CD14-positive monocyte (primary cell): ENCODE measurements at regions of chr2 and their contacts with region 1.

Region 1: GRCh38 chr2:171433763-171434670 is at the starts of genes DCAF17 and METTL8:
- DNase-seq: peak; percentile 88 to 92 (median 91)
- H3K4me3 ChIP-seq: peak within 1 kb of the TSS; percentile 71 to 84 (median 77)
- H3K4me3 Mint-ChIP-seq: peak within 1 kb of the TSS; percentile 87 to 90
- H3K27ac ChIP-seq: peak within 1 kb of the TSS; percentile 87 to 98
- H3K27ac Mint-ChIP-seq: peak within 1 kb of the TSS; percentile 85 to 95 (median 94)
- H3K4me1 ChIP-seq: peaks cover 13 to 19% of the 10 kb centered on the region in 2 donors
- H3K4me1 Mint-ChIP-seq: peaks cover 18% of the 10 kb centered on the region
- H3K27me3 ChIP-seq: no peaks in the 10 kb centered on the region
- H3K27me3 Mint-ChIP-seq: no peaks in the 10 kb centered on the region
- CTCF ChIP-seq: no peak
- polyA plus RNA-seq, gene DCAF17: 4.1 to 7.2 (median 7.0) TPM
- polyA plus RNA-seq, gene METTL8: 3.3 to 9.8 (median 6.9) TPM

Region 2: GRCh38 chr2:170973492-170974303 is 460.3 kb before region 1 on chr2:
- intact Hi-C with region 1: loop called in 1 of 2 experiments (anchors 5 kb)
- DNase-seq: peak; percentile 60 to 69 (median 64)
- H3K4me3 ChIP-seq: peak overlapping the region; percentile 60 to 90 (median 82)
- H3K4me3 Mint-ChIP-seq: peak overlapping the region; percentile 83 to 88
- H3K27ac ChIP-seq: peak overlapping the region; percentile 20 to 53
- H3K27ac Mint-ChIP-seq: peak overlapping the region in 2 of 7 donors; percentile 47 to 71
- H3K4me1 ChIP-seq: peaks cover 6 to 14% of the 10 kb centered on the region in 2 donors
- H3K4me1 Mint-ChIP-seq: peaks cover 15% of the 10 kb centered on the region
- H3K27me3 ChIP-seq: peaks cover 0 to 16% of the 10 kb centered on the region in 2 donors
- H3K27me3 Mint-ChIP-seq: peaks cover 4 to 23% (median 8%) of the 10 kb centered on the region in 3 donors
- CTCF ChIP-seq: peak; percentile 98

Region 3: DNA sequence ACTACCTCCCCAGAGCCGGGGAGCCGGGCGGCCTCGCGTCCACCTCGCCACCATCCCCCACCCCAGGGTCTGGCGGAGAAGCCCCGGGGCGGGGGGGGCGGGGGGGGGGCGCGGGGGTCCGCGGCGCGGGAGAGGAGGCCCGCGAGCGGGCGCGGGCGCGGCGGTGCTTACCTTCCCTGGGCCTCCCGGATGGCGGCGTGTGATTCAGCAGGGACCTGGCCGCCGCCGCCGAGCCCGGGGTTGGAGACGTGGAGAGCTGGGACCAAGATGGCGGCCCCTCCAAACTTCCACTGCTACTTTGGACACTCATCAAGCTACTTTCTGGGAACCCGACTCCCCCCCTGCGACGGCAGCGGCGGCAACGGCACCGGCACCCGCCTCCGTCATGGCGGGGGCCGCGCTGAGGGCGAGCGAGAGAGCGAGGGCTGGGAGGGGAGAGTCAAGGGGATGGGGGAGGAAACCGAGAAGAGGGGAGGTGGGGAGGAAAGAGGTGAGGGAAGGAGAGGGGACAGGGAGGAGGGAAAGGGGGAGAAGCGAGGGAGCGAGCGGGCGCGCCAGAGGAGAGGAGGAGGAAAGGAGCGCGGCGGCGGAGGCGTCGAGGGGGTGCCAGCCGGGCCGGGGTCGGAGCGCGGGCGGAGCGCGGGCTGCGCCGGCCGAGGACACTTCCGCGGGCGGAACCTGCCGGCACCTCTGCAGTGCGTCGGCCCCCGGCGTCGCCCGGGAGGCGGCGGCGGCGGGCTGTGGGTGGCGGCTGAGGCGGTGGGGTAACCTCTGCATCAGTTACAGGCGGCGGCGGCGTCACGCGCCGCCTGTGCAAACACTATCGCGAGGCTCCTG is 273.7 kb before region 1 on chr2 and contains the start of gene TLK1:
- intact Hi-C with region 1: loop called (anchors 5 to 10 kb)
- DNase-seq: peak; percentile 47 to 61 (median 53)
- H3K4me3 ChIP-seq: peak within 1 kb of the TSS; percentile 79 to 100 (median 94)
- H3K4me3 Mint-ChIP-seq: peak within 1 kb of the TSS; percentile 95
- H3K27ac ChIP-seq: peak within 1 kb of the TSS; percentile 72 to 91
- H3K27ac Mint-ChIP-seq: peak within 1 kb of the TSS; percentile 80 to 97 (median 96)
- H3K4me1 ChIP-seq: peaks cover 19 to 29% of the 10 kb centered on the region in 2 donors
- H3K4me1 Mint-ChIP-seq: peaks cover 53% of the 10 kb centered on the region
- H3K27me3 ChIP-seq: no peaks in the 10 kb centered on the region
- H3K27me3 Mint-ChIP-seq: peaks cover 0 to 3% (median 0%) of the 10 kb centered on the region in 3 donors
- CTCF ChIP-seq: no peak
- polyA plus RNA-seq, gene TLK1: 6.3 to 20.0 (median 8.6) TPM

Region 4: GRCh38 chr2:171522052-171522787 is 88.2 kb after region 1 on chr2 and contains the start of gene CYBRD1:
- intact Hi-C with region 1: no loop called
- DNase-seq: peak; percentile 10 to 36 (median 15)
- H3K4me3 ChIP-seq: peak within 1 kb of the TSS; percentile 55 to 85 (median 72)
- H3K4me3 Mint-ChIP-seq: peak within 1 kb of the TSS; percentile 96 to 97
- H3K27ac ChIP-seq: peak within 1 kb of the TSS; percentile 60 to 83
- H3K27ac Mint-ChIP-seq: peak within 1 kb of the TSS; percentile 58 to 87 (median 84)
- H3K4me1 ChIP-seq: peaks cover 16 to 24% of the 10 kb centered on the region in 2 donors
- H3K4me1 Mint-ChIP-seq: peaks cover 21% of the 10 kb centered on the region
- H3K27me3 ChIP-seq: no peaks in the 10 kb centered on the region
- H3K27me3 Mint-ChIP-seq: peaks cover 0 to 2% (median 1%) of the 10 kb centered on the region in 3 donors
- CTCF ChIP-seq: no peak
- polyA plus RNA-seq, gene CYBRD1: 21.7 to 61.0 (median 47.3) TPM

Region 5: GRCh38 chr2:171687287-171688128 is 253.5 kb after region 1 on chr2 and contains the start of gene DYNC1I2:
- intact Hi-C with region 1: loop called in 1 of 2 experiments (anchors 10 kb)
- DNase-seq: peak; percentile 68 to 85 (median 81)
- H3K4me3 ChIP-seq: peak within 1 kb of the TSS; percentile 63 to 88 (median 82)
- H3K4me3 Mint-ChIP-seq: peak within 1 kb of the TSS; percentile 91 to 97
- H3K27ac ChIP-seq: peak within 1 kb of the TSS; percentile 48 to 84
- H3K27ac Mint-ChIP-seq: peak within 1 kb of the TSS; percentile 86 to 96 (median 95)
- H3K4me1 ChIP-seq: peaks cover 10 to 16% of the 10 kb centered on the region in 2 donors
- H3K4me1 Mint-ChIP-seq: peaks cover 20% of the 10 kb centered on the region
- H3K27me3 ChIP-seq: peaks cover under 1 to 8% of the 10 kb centered on the region in 2 donors
- H3K27me3 Mint-ChIP-seq: peaks cover 2 to 9% (median 6%) of the 10 kb centered on the region in 3 donors
- CTCF ChIP-seq: no peak
- polyA plus RNA-seq, gene DYNC1I2: 30.8 to 39.1 (median 32.2) TPM